Activated B cell treated with CpG ODN at 0.5 μM for 24 hours (primary cell): ENCODE measurements at regions of chr14 and their contacts with region 1.

Region 1: DNA sequence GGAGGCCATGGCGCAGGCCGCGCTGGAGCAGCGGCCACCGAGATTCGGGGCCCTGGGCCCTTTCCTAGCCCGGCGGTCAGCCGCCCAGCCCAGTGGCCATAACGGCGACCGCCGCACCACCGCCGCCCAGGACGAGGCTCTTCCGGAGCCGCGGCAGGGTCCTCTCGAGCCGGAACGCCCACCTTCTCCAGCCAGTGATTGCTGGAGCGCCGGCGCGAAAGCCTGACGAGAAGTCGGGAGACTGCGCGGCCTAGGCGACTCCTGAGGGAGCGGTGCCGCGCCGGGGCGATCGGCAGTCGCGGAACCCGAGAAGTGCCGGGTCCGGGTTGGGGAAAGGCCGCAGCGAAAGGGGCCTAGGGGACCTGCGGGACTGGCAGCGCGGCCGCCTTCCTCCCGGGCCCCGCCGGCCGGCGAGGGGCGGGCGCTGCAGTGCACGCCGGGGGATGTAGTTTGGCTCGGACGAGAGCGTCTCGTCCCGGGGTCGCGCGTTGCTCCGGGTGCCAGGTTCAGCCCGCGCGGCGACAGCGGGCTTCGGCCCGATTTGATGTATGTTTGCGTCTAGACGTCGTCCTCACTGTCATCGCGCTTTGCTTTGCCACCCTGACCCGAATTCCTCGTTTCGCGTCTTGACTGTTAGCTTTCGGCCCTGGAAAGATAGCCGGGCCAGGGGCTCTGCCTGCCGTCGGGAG is at the start of gene VTI1B:
- DNase-seq: peak; percentile 86
- ATAC-seq: peak; percentile 93
- H3K4me3 Mint-ChIP-seq: peak within 1 kb of the TSS; percentile 89
- H3K27ac Mint-ChIP-seq: peak within 1 kb of the TSS; percentile 89
- H3K4me1 Mint-ChIP-seq: peaks cover 36% of the 10 kb centered on the region
- H3K27me3 Mint-ChIP-seq: no peaks in the 10 kb centered on the region
- CTCF ChIP-seq: no peak
- total RNA-seq, gene VTI1B: 76.3 and 78.9 TPM in 2 replicates

Region 2: GRCh38 chr14:67619446-67620216 is 55.0 kb before region 1 on chr14 and contains the start of gene ARG2:
- CTCF ChIA-PET with region 1: no interaction called
- POLR2A ChIA-PET with region 1: interaction called, 7 read pairs
- intact Hi-C with region 1: loop called (anchors 1 kb)
- DNase-seq: peak; percentile 95
- ATAC-seq: peak; percentile 94
- H3K4me3 Mint-ChIP-seq: peak within 1 kb of the TSS; percentile 88
- H3K27ac Mint-ChIP-seq: peak within 1 kb of the TSS; percentile 79
- H3K4me1 Mint-ChIP-seq: peaks cover 25% of the 10 kb centered on the region
- H3K27me3 Mint-ChIP-seq: no peaks in the 10 kb centered on the region
- CTCF ChIP-seq: no peak
- total RNA-seq, gene ARG2: 0.40 and 0.46 TPM in 2 replicates

Region 3: GRCh38 chr14:67816326-67817002 is 141.8 kb after region 1 on chr14 and contains the start of gene ZFYVE26:
- CTCF ChIA-PET with region 1: no interaction called
- POLR2A ChIA-PET with region 1: interaction called, 4 read pairs
- intact Hi-C with region 1: loop called (anchors 1 kb)
- DNase-seq: peak; percentile 70
- ATAC-seq: peak; percentile 85
- H3K4me3 Mint-ChIP-seq: peak within 1 kb of the TSS; percentile 94
- H3K27ac Mint-ChIP-seq: peak within 1 kb of the TSS; percentile 95
- H3K4me1 Mint-ChIP-seq: peaks cover 63% of the 10 kb centered on the region
- H3K27me3 Mint-ChIP-seq: no peaks in the 10 kb centered on the region
- CTCF ChIP-seq: no peak
- total RNA-seq, gene ZFYVE26: 40.7 and 41.1 TPM in 2 replicates

Region 4: DNA sequence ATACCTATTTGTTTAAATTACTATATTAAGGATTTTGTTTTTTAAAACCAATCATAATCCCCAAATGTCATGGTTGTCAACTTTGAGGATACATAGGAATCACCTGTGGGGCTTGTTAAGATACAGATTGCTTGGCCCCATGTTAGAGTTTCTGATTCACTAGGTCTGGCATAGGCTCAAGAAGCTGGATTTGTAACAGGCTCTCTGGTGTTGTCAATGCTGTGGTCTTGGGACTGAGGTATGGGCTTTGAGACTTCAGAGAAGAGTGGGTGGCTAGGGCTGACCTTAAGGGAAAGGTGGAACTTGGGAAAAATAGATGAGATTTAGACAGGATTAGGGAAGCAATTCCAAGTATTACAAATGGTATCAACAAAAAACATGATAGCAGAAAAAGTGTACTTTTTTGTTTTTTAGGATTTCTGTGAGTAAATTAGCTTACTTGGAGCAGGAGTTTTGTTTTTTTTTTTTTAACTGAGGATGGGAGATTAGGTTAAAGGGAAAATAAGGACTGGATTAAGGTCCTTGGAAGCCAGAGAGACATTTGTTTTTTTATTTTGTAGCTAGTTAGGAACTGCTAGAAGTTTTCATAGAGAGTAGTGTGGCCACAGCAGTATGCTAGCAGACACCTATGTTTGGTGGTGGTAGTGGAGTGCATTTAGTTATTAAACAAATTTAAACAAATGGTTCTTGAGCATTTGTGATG is 233.6 kb after region 1 on chr14:
- CTCF ChIA-PET with region 1: no interaction called
- POLR2A ChIA-PET with region 1: no interaction called
- intact Hi-C with region 1: no loop called
- DNase-seq: no peak
- ATAC-seq: no peak
- H3K4me3 Mint-ChIP-seq: no peak overlapping the region
- H3K27ac Mint-ChIP-seq: no peak overlapping the region
- H3K4me1 Mint-ChIP-seq: no peaks in the 10 kb centered on the region
- H3K27me3 Mint-ChIP-seq: no peaks in the 10 kb centered on the region
- CTCF ChIP-seq: no peak

Region 5: GRCh38 chr14:68577827-68578541 is 903.4 kb after region 1 on chr14:
- CTCF ChIA-PET with region 1: no interaction called
- POLR2A ChIA-PET with region 1: no interaction called
- intact Hi-C with region 1: no loop called
- DNase-seq: no peak
- ATAC-seq: no peak
- H3K4me3 Mint-ChIP-seq: no peak overlapping the region
- H3K27ac Mint-ChIP-seq: no peak overlapping the region
- H3K4me1 Mint-ChIP-seq: no peaks in the 10 kb centered on the region
- H3K27me3 Mint-ChIP-seq: no peaks in the 10 kb centered on the region
- CTCF ChIP-seq: no peak